HAP-1 (cell line): ENCODE measurements at regions of chr21 and their contacts with region 1.

Region 1: DNA sequence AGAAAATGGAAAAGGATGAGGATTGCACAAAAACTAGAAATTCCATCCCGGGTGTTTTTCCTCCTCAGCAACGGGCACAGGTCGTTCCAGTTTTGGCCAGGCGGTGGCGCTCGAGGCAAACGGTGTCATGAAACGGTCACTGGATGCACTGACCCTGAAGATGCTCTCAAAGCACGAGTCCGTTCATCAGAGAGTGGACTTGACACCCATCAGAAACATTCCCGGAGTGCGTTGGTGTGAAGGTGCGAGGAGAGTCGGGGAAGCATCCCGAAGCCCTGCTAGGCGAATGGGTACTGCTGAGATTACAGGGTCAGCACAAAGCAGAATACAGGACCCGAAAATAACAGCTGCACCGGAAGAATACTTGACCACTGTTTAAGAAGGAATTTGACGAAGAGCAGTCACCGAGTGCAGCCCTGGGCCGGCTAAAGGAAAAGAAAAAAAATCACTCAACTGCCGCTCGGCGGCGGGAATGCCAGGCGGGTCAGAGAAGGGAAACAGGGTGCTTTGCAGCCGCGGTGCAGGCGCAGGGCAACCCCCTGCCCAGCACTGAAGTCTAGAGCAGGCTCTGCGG is 71.7 kb upstream of the ETS2 start:
- DNase-seq: peak; percentile 55 to 92
- H3K4me3 ChIP-seq: peak overlapping the region; percentile 9; the same call in 1 of the 2 replicates
- H3K4me1 ChIP-seq: peaks cover 7% of the 10 kb centered on the region
- H3K27me3 ChIP-seq: no peaks in the 10 kb centered on the region

Region 2: GRCh38 chr21:39141502-39141901 is 407.4 kb after region 1 on chr21:
- in situ Hi-C with region 1: loop called (anchors 10 kb)
- DNase-seq: no peak
- H3K4me3 ChIP-seq: no peak overlapping the region
- H3K4me1 ChIP-seq: no peaks in the 10 kb centered on the region
- H3K27me3 ChIP-seq: no peaks in the 10 kb centered on the region; the same call in 1 of the 2 replicates